ENCODE measurements at regions of chr7 and their contacts with region 1.

Region 1: DNA sequence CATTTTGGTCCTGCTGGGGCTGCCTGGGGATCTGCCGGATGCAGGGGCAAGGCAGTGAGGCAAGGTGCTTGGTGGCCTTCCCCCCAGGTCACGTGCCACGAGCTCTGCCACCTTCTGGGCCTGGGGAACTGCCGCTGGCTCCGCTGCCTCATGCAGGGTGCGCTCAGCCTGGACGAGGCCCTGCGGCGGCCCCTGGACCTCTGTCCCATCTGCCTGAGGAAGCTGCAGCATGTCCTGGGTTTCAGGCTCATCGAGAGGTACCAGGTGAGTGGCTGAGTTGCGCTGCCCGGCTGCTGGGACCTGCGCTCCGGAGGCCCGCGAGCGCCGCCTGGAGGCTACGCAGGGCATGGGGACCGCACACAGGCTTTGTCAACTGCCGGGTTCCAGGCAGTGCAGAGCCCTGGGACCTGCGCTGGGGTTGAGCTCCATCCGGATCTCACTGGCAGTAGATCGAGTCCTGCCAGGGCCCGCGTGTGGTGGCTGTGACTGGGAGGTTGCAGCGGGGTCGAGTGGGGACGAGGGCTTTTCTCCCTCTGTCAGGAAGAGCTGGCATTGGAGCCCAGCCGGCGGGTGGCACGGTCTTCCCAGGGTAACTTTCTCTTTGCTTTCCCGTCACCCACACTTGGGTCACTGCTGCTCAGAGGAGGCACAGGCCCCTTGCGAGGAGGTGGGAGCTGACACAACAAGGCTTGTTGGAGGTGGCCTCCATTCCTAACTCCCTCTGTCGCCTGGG is 21.7 kb downstream of the AMZ1 start:
- DNase-seq: peak; percentile 91
- ATAC-seq: peak; percentile 88
- H3K4me3 Mint-ChIP-seq: peak overlapping the region; percentile 74
- H3K27ac Mint-ChIP-seq: peak overlapping the region; percentile 81
- H3K4me1 Mint-ChIP-seq: peaks cover 36% of the 10 kb centered on the region
- H3K27me3 Mint-ChIP-seq: peaks cover 33% of the 10 kb centered on the region

Region 2: DNA sequence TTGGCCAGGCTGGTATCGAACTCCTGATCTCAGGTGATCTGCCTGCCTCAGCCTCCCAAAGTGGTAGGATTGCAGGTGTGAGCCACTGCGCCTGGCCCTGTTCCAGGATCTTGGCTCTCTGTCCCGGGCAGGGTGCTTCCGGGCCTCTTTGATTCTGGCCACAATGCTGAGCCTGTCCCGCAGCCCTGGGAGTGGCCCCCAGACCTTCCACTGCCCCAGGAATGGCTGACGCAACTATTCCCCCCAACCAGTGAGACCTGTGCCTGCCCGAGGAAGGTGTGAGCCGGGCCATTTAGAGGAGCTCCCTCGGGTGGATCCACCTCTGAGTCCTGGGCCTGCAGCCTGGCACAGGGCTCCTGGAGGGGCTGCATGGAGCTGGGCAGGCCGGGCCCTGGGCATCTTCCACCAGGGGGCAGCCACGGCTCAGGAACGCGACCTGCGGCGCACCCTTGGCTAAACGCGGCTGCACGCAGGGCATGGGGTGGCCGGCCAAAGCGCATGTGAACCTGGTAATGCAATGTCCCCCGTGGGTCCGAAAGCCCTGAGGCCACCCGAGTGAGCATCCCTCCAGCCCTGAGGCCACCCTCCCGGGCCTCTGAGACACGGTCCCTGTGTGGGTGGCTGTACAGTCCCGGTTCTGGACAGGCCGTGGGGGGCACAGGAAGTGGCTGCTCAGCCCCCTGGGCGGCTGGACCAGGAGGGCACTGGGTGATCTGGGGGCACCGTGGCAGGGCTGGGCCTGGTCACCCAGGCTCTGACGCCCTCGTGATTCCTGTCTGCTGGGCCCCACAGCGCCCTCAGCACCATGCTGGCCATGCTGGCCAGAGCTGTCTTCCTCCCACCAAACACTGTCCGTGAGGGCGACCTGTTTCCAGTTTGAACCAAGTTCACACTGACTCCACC is 258.3 kb before region 1 on chr7:
- CTCF ChIA-PET with region 1: interaction called, 21 read pairs
- DNase-seq: peak; percentile 83
- ATAC-seq: peak; percentile 95
- H3K4me3 Mint-ChIP-seq: no peak overlapping the region
- H3K27ac Mint-ChIP-seq: no peak overlapping the region
- H3K4me1 Mint-ChIP-seq: peaks cover 8% of the 10 kb centered on the region
- H3K27me3 Mint-ChIP-seq: peaks cover 12% of the 10 kb centered on the region

Region 3: GRCh38 chr7:2608921-2609411 is 100.8 kb before region 1 on chr7:
- CTCF ChIA-PET with region 1: interaction called, 18 read pairs
- DNase-seq: no peak
- ATAC-seq: peak; percentile 45
- H3K4me3 Mint-ChIP-seq: no peak overlapping the region
- H3K27ac Mint-ChIP-seq: no peak overlapping the region
- H3K4me1 Mint-ChIP-seq: peaks cover 8% of the 10 kb centered on the region
- H3K27me3 Mint-ChIP-seq: no peaks in the 10 kb centered on the region

Region 4: DNA sequence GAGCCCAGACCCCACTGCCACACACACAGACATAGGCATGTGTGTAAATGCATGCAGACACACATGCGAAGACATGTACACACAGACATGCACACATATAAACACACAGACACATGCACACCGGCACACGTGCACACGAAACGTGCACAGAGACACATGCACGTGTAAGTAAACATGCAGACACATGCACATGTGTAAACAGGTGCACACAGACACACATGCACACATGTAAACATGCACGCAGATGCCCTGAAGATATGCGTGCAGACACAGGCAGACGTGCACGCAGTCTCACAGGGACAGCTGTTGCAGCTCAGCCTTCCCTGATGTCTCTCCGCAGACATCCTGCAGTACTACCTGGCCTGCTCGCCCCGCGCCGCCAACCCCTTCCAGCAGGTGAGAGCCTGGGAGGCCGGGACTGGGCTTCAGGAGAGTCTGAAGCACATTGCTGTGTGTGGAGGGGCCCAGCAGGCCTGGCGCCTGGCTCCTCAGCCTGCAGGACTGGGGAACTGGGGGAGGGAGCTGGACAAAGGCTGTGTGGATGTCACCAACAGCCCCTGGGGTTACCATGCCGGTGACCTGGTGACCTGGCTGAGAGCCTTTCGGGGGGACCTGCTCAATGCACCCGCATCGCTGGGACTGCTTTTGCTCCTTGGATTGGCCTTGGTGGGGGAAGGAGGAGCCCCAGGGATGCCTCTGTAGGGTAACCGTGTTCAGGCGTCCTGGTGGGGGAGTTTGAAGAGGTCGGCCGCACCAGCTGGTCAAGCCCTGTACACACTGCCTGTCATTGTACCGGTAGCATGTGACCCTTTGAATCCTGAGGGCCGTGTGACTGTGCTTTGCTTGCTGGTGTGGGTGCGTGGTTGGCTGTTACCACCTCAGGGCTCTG is 57.6 kb before region 1 on chr7:
- CTCF ChIA-PET with region 1: interaction called, 14 read pairs
- DNase-seq: no peak
- ATAC-seq: no peak
- H3K4me3 Mint-ChIP-seq: no peak overlapping the region
- H3K27ac Mint-ChIP-seq: no peak overlapping the region
- H3K4me1 Mint-ChIP-seq: peaks cover 6% of the 10 kb centered on the region
- H3K27me3 Mint-ChIP-seq: no peaks in the 10 kb centered on the region

Region 5: DNA sequence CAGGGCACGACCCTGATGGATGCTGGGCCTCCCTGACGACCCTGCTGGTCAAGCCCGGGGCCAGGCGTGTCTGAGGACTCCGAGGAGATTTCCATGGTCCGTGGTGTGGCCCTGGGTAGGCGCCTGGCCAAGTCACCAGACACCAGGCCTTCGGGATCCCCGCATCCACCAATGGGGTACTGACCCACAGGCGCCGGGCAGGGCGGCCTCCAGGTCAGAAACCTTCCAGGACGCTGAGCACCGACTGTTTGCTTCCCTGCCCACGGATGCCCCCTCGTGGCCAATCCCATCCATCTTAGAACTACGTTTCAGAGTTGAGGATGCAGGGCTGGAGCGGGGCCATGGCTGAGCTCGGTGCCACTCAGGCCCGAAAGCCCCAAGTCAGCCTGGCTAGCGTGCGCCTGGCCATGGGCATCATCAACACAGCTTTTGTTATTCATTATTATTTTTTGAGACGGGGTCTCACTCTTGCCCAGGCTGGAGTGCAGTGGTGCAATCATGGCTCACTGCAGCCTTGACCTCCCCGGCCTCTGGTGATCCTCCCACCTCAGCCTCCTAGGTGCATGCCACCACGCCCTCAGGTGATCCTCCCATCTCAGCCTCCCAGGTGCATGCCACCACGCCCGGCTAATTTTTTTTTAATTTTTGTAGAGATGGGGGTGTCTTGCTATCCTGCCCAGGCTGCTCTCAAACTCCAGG is 28.8 kb before region 1 on chr7:
- CTCF ChIA-PET with region 1: interaction called, 70 read pairs
- DNase-seq: peak; percentile 64
- ATAC-seq: peak; percentile 60
- H3K4me3 Mint-ChIP-seq: no peak overlapping the region
- H3K27ac Mint-ChIP-seq: no peak overlapping the region
- H3K4me1 Mint-ChIP-seq: no peaks in the 10 kb centered on the region
- H3K27me3 Mint-ChIP-seq: peaks cover 32% of the 10 kb centered on the region

Region 6: DNA sequence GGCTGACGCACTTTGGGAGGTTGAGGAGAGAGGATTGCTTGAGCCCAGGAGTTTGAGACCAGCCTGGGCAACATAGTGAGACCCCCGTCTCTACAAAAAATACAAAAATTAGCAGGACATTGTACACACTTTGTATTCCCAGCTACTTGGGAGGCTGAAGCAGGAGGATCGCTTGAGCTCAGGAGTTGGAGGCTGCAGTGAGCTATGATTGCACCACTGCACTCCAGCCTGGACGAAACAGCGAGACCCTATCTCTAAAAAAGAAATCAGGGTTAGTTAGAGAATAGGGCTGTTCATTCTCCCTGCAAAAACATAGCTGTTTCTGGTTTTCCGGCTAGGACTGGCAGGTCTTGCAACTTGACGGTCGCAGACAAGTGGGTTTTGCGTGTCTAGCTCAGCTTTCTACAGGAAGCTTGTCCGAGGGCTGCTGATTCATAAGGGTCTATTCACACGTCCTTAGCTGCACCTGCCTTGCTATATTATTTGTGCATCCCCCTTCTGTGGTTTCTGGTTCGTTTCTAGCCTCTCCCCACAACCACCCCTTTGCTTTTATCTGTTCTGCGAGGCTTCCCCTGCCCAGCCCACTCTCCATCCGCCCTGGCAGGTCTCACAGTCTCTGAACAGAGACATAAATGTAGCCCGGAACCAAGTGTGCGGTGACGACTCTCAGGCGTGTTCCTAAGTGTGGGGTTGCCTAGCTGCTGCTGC is 11.0 kb before region 1 on chr7:
- CTCF ChIA-PET with region 1: interaction called, 107 read pairs
- DNase-seq: peak; percentile 96
- ATAC-seq: peak; percentile 90
- H3K4me3 Mint-ChIP-seq: peak overlapping the region; percentile 47
- H3K27ac Mint-ChIP-seq: peak overlapping the region; percentile 82
- H3K4me1 Mint-ChIP-seq: peaks cover 36% of the 10 kb centered on the region
- H3K27me3 Mint-ChIP-seq: peaks cover 39% of the 10 kb centered on the region

Measured in activated CD8-positive, alpha-beta memory T cell treated with anti-CD3 and anti-CD28 coated beads, Interleukin-2, amount 10 ng/mL, durations not matched to agents 7 days and 5 days (primary cell).